CD4-positive, alpha-beta memory T cell (primary cell): ENCODE measurements at regions of chr10 and their contacts with region 1.

Region 1: GRCh38 chr10:24642622-24643417 is 80.9 kb downstream of the ARHGAP21 start:
- DNase-seq: peak in 4 of 5 donors; percentile 54 to 58 (median 54)
- H3K4me3 ChIP-seq: no peak overlapping the region
- H3K4me3 Mint-ChIP-seq: no peak overlapping the region
- H3K27ac ChIP-seq: no peak overlapping the region
- H3K27ac Mint-ChIP-seq: no peak overlapping the region
- H3K4me1 ChIP-seq: peaks cover 11% of the 10 kb centered on the region
- H3K4me1 Mint-ChIP-seq: peaks cover 0 to 4% (median 2%) of the 10 kb centered on the region in 4 donors
- H3K27me3 ChIP-seq: no peaks in the 10 kb centered on the region
- H3K27me3 Mint-ChIP-seq: peaks cover 0 to 1% of the 10 kb centered on the region in 2 donors

Region 2: GRCh38 chr10:24617771-24618391 is 24.9 kb before region 1 on chr10:
- CTCF ChIA-PET with region 1: interaction called, 20 read pairs
- POLR2A ChIA-PET with region 1: interaction called, 6 read pairs
- intact Hi-C with region 1: no loop called
- DNase-seq: peak; percentile 32 to 47 (median 39)
- H3K4me3 ChIP-seq: no peak overlapping the region
- H3K4me3 Mint-ChIP-seq: no peak overlapping the region
- H3K27ac ChIP-seq: no peak overlapping the region
- H3K27ac Mint-ChIP-seq: peak overlapping the region in 2 of 7 donors; percentile 5 to 47
- H3K4me1 ChIP-seq: peaks cover 13% of the 10 kb centered on the region
- H3K4me1 Mint-ChIP-seq: peaks cover 16 to 31% (median 23%) of the 10 kb centered on the region in 4 donors
- H3K27me3 ChIP-seq: no peaks in the 10 kb centered on the region
- H3K27me3 Mint-ChIP-seq: no peaks in the 10 kb centered on the region

Region 3: GRCh38 chr10:24929056-24929544 is 286.3 kb after region 1 on chr10:
- CTCF ChIA-PET with region 1: interaction called, 10 read pairs
- POLR2A ChIA-PET with region 1: no interaction called
- intact Hi-C with region 1: no loop called
- DNase-seq: no peak
- H3K4me3 ChIP-seq: no peak overlapping the region
- H3K4me3 Mint-ChIP-seq: no peak overlapping the region
- H3K27ac ChIP-seq: no peak overlapping the region
- H3K27ac Mint-ChIP-seq: peak overlapping the region in 1 of 7 donors; percentile 44
- H3K4me1 ChIP-seq: no peaks in the 10 kb centered on the region
- H3K4me1 Mint-ChIP-seq: peaks cover 0 to 12% (median 3%) of the 10 kb centered on the region in 4 donors
- H3K27me3 ChIP-seq: no peaks in the 10 kb centered on the region
- H3K27me3 Mint-ChIP-seq: no peaks in the 10 kb centered on the region

Region 4: DNA sequence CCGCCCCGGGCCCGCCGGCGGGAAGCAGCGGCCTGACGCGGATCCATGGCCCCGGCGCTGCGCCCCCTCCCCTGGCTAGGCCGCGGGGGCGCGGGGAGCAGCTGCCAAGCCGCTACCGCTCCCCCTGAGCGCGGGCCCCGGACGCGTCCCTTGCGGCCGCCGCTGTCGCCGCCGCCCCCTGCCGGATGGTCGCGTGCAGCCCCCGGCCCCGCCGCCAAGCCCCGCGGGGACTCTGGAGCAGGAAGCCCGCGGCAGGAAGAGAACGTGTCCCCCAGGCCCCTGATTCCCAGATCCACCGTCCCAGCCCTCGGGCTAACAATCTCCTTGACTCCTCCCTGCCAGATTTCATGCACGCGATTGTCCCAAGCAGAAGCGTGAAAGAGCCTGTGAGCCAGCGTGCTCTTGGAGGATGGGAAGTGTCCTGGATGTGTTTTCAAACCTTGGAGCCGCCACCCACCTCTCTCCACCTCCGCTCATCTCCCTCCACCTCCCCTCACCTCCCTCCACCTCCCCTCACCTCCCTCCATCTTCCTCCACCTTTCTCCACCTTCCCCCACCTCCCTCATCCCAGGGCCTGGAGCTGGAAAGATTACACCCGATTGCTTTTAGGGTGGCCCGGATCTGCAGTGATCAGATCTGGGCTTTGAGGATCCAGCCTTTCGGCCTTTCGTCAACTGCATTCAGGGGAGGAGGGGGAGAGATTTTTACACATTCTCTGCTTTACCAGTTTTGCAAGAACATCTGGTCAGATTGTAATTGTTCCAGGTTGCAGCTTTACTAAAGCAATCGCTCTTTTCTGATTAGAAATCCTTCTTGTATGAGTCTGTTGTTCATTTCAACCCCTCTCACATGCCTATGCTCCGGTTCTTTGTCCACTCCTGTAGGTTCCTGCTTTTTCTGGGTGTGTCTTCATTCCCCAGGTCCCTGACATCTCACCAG is 310.2 kb after region 1 on chr10:
- CTCF ChIA-PET with region 1: interaction called, 13 read pairs
- POLR2A ChIA-PET with region 1: interaction called, 5 read pairs
- intact Hi-C with region 1: loop called (anchors 1 kb)
- DNase-seq: peak; percentile 43 to 66 (median 49)
- H3K4me3 ChIP-seq: peak overlapping the region in 1 of 2 donors; percentile 59
- H3K4me3 Mint-ChIP-seq: peak overlapping the region; percentile 78 to 88 (median 84)
- H3K27ac ChIP-seq: peak overlapping the region; percentile 34
- H3K27ac Mint-ChIP-seq: peak overlapping the region; percentile 25 to 85 (median 66)
- H3K4me1 ChIP-seq: peaks cover 13% of the 10 kb centered on the region
- H3K4me1 Mint-ChIP-seq: peaks cover 13 to 37% (median 20%) of the 10 kb centered on the region in 4 donors
- H3K27me3 ChIP-seq: no peaks in the 10 kb centered on the region
- H3K27me3 Mint-ChIP-seq: no peaks in the 10 kb centered on the region

Region 5: GRCh38 chr10:24989867-24990266 is 347.0 kb after region 1 on chr10:
- CTCF ChIA-PET with region 1: interaction called, 17 read pairs
- POLR2A ChIA-PET with region 1: interaction called, 3 read pairs
- intact Hi-C with region 1: loop called (anchors 1 kb)
- DNase-seq: no peak
- H3K4me3 ChIP-seq: no peak overlapping the region
- H3K4me3 Mint-ChIP-seq: no peak overlapping the region
- H3K27ac ChIP-seq: no peak overlapping the region
- H3K27ac Mint-ChIP-seq: no peak overlapping the region
- H3K4me1 ChIP-seq: no peaks in the 10 kb centered on the region
- H3K4me1 Mint-ChIP-seq: no peaks in the 10 kb centered on the region
- H3K27me3 ChIP-seq: no peaks in the 10 kb centered on the region
- H3K27me3 Mint-ChIP-seq: no peaks in the 10 kb centered on the region

Region 6: DNA sequence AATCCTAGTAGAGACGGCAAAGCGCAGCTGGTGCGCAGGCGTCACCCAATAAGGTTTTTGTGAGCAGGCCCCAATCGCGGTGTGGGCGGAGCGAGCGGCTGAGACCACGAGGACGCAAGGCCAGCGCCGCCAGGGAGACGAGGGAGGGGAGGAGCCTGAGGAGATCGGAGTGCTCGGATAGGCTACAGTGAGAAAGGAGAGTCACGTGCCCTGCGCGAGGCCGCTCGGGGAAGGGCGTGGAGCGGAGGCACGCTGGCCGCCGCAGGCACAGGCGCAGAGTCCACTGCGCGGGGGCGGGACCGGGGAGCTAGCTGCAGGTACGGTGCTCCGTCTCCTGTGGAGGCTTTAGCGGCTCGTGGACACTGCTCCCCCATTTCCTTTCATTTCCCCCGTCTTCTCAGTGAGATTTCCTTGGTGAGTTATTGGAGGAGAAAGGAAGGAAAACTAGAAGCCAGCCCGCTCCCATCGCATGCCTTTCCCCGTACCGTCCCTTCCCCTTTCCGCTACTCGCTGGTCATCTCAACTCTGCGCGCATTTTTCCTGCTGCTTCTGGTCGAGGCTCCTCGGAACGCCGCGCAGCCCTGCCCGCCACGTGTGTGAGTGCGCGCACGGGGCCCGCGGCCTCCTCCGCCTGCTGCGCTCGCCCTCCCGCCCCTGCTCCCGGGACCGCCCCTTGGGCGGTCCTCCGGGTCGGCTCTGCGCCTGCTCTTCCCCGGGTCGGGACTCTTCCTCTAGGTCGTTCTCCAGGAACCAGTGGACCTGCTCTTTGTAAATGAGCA is 373.7 kb after region 1 on chr10 and contains the start of gene THNSL1:
- CTCF ChIA-PET with region 1: interaction called, 3 read pairs
- POLR2A ChIA-PET with region 1: no interaction called
- intact Hi-C with region 1: loop called (anchors 1 kb)
- DNase-seq: peak; percentile 95 to 99 (median 97)
- H3K4me3 ChIP-seq: peak within 1 kb of the TSS; percentile 30 to 76
- H3K4me3 Mint-ChIP-seq: peak within 1 kb of the TSS; percentile 88 to 97 (median 93)
- H3K27ac ChIP-seq: peak within 1 kb of the TSS; percentile 85
- H3K27ac Mint-ChIP-seq: peak within 1 kb of the TSS; percentile 96 to 99 (median 98)
- H3K4me1 ChIP-seq: peaks cover 22% of the 10 kb centered on the region
- H3K4me1 Mint-ChIP-seq: peaks cover 9 to 25% (median 17%) of the 10 kb centered on the region in 4 donors
- H3K27me3 ChIP-seq: no peaks in the 10 kb centered on the region
- H3K27me3 Mint-ChIP-seq: no peaks in the 10 kb centered on the region
- total RNA-seq, gene THNSL1: 6.7 to 7.5 TPM

Region 7: GRCh38 chr10:25080880-25081581 is 438.2 kb after region 1 on chr10:
- CTCF ChIA-PET with region 1: interaction called, 104 read pairs
- POLR2A ChIA-PET with region 1: interaction called, 3 read pairs
- intact Hi-C with region 1: loop called (anchors 1 kb)
- DNase-seq: peak in 4 of 5 donors; percentile 40 to 58 (median 48)
- H3K4me3 ChIP-seq: no peak overlapping the region
- H3K4me3 Mint-ChIP-seq: no peak overlapping the region
- H3K27ac ChIP-seq: no peak overlapping the region
- H3K27ac Mint-ChIP-seq: peak overlapping the region in 3 of 7 donors; percentile 1 to 54 (median 30)
- H3K4me1 ChIP-seq: no peaks in the 10 kb centered on the region
- H3K4me1 Mint-ChIP-seq: peaks cover 0 to 10% (median 4%) of the 10 kb centered on the region in 4 donors
- H3K27me3 ChIP-seq: no peaks in the 10 kb centered on the region
- H3K27me3 Mint-ChIP-seq: peaks cover 2 to 10% of the 10 kb centered on the region in 2 donors